Left colon (tissue), 2 donors: ENCODE measurements at regions of chr6 and their contacts with region 1.

Region 1: DNA sequence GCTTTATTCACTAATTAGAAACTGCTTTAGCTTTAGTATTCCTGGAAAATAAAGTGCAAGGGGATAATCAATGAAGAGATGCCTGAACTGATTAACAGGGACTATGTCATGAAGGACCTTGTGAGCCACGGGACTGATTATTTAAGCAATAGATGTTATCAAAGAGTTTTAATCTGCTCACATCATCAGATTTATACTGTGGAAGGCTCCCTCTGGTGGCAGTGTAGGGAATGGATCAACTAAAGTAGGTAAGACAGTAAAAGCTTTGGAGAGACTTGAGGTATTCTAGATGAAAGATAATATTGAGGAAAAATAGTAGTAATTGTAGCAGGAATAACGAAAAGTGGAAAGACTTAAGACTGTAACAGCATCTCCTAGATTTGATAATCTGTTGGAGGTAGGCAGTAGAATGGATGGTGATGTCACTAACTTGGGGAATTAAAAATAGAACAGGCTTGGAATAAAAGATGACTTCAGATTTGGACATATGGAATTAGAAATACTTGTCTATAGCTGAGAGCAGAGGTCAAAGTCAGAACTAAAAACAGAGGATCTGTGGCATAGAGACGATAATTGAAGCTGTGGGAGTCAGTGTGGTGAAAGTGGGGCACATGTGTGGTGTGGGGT is 80.3 kb upstream of the HTR1E start:
- DNase-seq: peak in 1 of 2 donors; percentile 39
- ATAC-seq: no peak

Region 2: GRCh38 chr6:85756982-85757381 is 1100.1 kb before region 1 on chr6:
- intact Hi-C with region 1: loop called in 1 of 2 experiments (anchors 10 kb)
- DNase-seq: no peak
- ATAC-seq: no peak